PC-9 (cell line): ENCODE measurements at regions of chr7 and their contacts with region 1.

Region 1: DNA sequence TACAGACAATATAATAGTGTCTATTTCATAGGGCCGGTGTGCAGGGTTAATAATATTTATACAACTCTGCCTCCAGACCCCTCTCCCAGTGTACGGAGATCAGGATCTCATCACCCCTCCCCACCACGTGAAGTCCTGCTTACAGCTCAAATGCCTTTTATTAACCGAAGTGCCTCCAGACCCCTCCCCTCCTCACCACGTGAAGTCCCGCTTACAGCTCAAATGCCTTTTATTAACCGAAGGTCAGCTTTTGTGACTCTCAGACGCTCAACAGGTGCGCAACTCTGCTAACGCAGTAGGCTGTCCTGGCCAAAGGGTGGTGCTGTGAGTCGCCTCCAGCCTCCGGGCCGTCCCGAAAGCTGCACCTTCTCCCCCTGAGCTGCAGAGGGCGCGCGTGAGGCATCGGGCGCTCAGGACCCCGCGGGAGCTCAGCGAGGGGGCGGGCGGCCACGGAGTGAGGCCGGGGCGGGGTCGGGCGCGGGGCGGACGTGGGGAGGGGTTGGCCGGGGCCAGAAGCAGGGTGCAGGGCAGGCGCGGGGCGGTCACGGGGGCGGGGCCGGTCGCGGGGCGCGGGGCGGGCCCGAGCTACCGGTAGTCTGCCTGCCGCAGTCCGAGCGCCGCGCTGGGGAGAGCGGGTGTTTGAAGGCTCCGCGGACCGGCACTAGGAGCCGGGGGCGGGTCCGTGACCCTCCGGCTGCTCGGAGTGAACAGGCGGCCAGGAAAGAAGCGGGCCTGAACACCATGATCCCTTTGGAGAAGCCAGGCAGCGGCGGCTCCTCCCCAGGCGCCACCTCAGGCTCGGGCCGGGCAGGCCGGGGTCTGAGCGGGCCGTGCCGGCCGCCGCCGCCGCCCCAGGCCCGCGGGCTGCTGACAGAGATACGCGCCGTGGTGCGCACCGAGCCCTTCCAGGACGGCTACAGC is at the start of gene STK17A:
- DNase-seq: peak; percentile 90 to 99
- H3K4me3 ChIP-seq: peak within 1 kb of the TSS; percentile 93
- H3K27ac ChIP-seq: peak within 1 kb of the TSS; percentile 78
- H3K4me1 ChIP-seq: peaks cover 38% of the 10 kb centered on the region
- H3K27me3 ChIP-seq: no peaks in the 10 kb centered on the region
- CTCF ChIP-seq: peak; percentile 99
- total RNA-seq, gene STK17A: 15.8 and 18.8 TPM in 2 replicates

Region 2: DNA sequence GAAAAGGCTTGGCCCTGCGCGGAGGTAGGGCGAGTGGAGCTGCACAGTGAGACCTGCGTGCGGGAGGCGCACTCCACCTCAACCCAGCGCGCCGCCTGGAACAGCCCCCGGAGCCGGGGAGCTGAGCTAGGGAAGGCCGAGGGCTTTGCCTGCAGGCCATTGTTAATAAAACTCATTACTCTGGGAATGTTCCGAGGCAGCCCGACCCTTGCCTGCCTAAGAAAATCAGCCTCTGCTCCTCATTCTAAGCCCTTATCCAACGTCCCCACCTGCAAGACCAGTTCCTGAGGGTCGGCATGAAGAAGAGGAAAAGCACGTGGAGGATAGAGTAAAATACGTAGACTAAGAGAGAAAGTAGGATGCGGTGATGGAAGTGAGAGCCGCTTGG is 726.2 kb before region 1 on chr7:
- CTCF ChIA-PET with region 1: no interaction called
- POLR2A ChIA-PET with region 1: no interaction called
- intact Hi-C with region 1: no loop called
- DNase-seq: no peak
- H3K4me3 ChIP-seq: no peak overlapping the region
- H3K27ac ChIP-seq: no peak overlapping the region
- H3K4me1 ChIP-seq: no peaks in the 10 kb centered on the region
- H3K27me3 ChIP-seq: peaks cover 65% of the 10 kb centered on the region
- CTCF ChIP-seq: no peak

Region 3: DNA sequence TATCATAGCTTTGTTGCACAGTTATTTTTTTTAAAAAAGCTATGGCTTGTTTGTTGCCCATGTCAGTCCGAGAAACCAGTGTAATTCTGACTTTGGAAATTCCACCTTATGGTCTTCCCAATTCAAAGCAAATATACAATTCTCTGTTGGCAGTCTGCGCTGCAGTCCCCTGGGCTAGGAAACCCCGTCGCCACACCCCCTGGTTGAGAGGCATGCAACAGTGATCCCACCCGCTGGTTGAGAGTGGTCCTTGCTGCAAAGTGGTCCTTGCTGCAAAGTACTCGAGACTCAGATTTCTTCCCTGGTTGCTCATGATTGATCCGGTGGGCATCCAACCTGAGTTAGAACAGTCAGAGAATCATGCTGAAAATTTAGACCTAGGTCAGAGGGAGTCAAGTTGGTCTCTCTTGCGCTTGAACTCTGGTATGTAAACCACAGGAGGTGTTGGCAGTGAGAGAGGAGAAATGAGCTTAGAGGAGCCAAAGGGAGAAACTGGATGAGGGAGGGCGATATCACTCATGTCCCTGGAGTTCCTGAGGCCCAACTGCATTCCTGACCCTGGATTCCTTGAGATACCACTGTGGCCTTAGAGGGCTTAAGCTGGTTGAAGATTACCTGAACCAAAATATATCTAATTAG is 44.9 kb before region 1 on chr7:
- CTCF ChIA-PET with region 1: no interaction called
- POLR2A ChIA-PET with region 1: interaction called, 18 read pairs
- intact Hi-C with region 1: no loop called
- DNase-seq: no peak
- H3K4me3 ChIP-seq: no peak overlapping the region
- H3K27ac ChIP-seq: no peak overlapping the region
- H3K4me1 ChIP-seq: peaks cover 8% of the 10 kb centered on the region; the same call in 1 of the 2 replicates
- H3K27me3 ChIP-seq: peaks cover 30% of the 10 kb centered on the region
- CTCF ChIP-seq: no peak

Region 4: GRCh38 chr7:43639858-43640491 is 57.2 kb after region 1 on chr7:
- CTCF ChIA-PET with region 1: interaction called, 14 read pairs
- POLR2A ChIA-PET with region 1: interaction called, 12 read pairs
- intact Hi-C with region 1: no loop called
- DNase-seq: peak in 1 of 2 experiments; percentile 61
- H3K4me3 ChIP-seq: no peak overlapping the region
- H3K27ac ChIP-seq: peak overlapping the region; percentile 29; the same call in 1 of the 2 replicates
- H3K4me1 ChIP-seq: no peaks in the 10 kb centered on the region
- H3K27me3 ChIP-seq: no peaks in the 10 kb centered on the region
- CTCF ChIP-seq: no peak

Region 5: GRCh38 chr7:43700059-43700501 is 117.3 kb after region 1 on chr7:
- CTCF ChIA-PET with region 1: interaction called, 97 read pairs
- POLR2A ChIA-PET with region 1: interaction called, 23 read pairs
- intact Hi-C with region 1: loop called (anchors 1 kb)
- DNase-seq: peak in 1 of 2 experiments; percentile 68
- H3K4me3 ChIP-seq: no peak overlapping the region
- H3K27ac ChIP-seq: no peak overlapping the region
- H3K4me1 ChIP-seq: peaks cover 5% of the 10 kb centered on the region
- H3K27me3 ChIP-seq: no peaks in the 10 kb centered on the region
- CTCF ChIP-seq: peak; percentile 93

Region 6: DNA sequence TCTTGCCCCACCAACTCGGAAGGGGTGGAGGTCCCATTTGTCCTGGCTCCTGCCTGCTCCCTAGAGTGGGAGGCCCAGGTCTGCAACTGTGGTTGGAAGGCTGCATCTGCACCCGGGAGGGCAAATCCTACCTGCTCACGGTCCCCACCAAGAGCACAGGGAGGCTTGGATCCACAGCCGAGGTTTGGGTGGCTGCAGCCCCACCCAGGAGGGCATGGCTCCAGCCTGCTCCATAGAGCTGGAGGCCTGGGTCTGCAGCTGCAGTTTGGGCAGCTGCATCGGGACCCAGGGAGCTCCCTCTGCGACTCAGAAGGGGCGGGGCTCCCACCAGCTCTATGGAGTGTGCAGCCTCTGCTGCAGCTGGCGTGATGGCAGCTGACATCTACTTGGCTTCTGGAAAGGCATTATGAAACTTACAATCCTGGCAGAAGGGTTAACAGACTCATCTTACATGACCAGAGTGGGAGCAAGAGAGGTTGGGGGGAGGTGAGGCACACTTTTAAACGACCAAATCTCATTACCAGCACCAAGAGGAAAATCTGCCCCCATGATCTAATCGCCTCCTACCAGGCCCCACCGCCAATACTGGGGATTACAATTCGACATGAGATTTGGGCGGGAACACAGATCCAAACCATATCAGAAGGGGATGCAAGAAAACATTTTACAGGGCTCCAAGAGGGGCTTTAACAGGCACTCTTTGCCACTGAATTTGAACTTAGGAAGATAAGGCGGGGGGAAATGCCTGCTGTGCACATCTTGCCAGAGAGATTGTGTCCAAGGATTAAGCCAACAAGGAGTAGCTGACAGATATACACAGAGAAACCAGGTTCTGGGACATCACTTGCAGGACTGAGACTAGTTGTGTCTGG is 167.5 kb after region 1 on chr7:
- CTCF ChIA-PET with region 1: no interaction called
- POLR2A ChIA-PET with region 1: interaction called, 16 read pairs
- intact Hi-C with region 1: no loop called
- DNase-seq: no peak
- H3K4me3 ChIP-seq: no peak overlapping the region
- H3K27ac ChIP-seq: no peak overlapping the region
- H3K4me1 ChIP-seq: peaks cover 16% of the 10 kb centered on the region
- H3K27me3 ChIP-seq: no peaks in the 10 kb centered on the region
- CTCF ChIP-seq: no peak

Region 7: GRCh38 chr7:43888993-43889945 is 306.5 kb after region 1 on chr7:
- CTCF ChIA-PET with region 1: interaction called, 13 read pairs
- POLR2A ChIA-PET with region 1: no interaction called
- intact Hi-C with region 1: no loop called
- DNase-seq: no peak
- H3K4me3 ChIP-seq: no peak overlapping the region
- H3K27ac ChIP-seq: no peak overlapping the region
- H3K4me1 ChIP-seq: peaks cover 10% of the 10 kb centered on the region; the same call in 1 of the 2 replicates
- H3K27me3 ChIP-seq: no peaks in the 10 kb centered on the region
- CTCF ChIP-seq: no peak